Motor neuron (in vitro differentiated cells): ENCODE measurements at regions of chr4 and their contacts with region 1.

Region 1: DNA sequence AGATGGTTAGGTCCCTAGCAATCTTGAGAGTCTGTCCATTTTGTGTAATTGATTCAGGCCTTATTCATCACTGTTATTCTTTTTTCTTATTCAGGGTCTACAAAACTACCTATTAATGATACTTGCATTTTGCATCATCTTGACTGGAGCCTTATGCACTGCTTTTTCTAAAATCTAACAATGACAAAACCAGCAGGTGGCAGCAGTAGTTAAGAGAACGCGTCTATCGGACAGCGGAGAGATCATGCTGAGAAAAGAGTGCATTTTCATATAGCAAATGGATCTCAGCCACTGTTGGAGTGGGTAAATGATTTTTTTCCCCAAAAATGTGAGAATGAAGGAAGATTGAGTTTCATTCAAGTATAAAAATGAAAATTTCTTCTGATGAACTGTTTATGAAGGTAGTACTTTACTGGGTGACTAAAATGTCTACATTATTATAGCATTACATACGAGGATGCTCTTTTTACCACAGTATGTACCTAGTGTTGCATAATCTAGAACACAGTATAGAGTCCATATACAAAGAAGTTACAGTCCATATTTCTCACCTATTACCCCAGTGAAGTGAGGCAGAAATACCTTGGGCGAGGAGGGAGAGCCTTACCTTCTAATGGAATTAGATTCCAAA is 43.2 kb downstream of the TMEM144 start:
- ATAC-seq: peak; percentile 68 to 92 (median 85)
- H3K4me3 ChIP-seq: no peak overlapping the region
- H3K27ac ChIP-seq: no peak overlapping the region
- H3K4me1 ChIP-seq: no peaks in the 10 kb centered on the region

Region 2: GRCh38 chr4:157751631-157752030 is 501.8 kb before region 1 on chr4:
- in situ Hi-C with region 1: no loop called
- ATAC-seq: no peak
- H3K4me3 ChIP-seq: no peak overlapping the region
- H3K27ac ChIP-seq: no peak overlapping the region
- H3K4me1 ChIP-seq: no peaks in the 10 kb centered on the region

Region 3: GRCh38 chr4:157978680-157979361 is 274.6 kb before region 1 on chr4:
- in situ Hi-C with region 1: loop called in 1 of 9 experiments (anchors 25 kb)
- ATAC-seq: peak; percentile 82 to 92 (median 90)
- H3K4me3 ChIP-seq: peak overlapping the region in 1 of 5 donors; percentile 8
- H3K27ac ChIP-seq: no peak overlapping the region
- H3K4me1 ChIP-seq: peaks cover 0 to 9% of the 10 kb centered on the region in 2 donors

Region 4: GRCh38 chr4:158376106-158376840 is 122.8 kb after region 1 on chr4:
- in situ Hi-C with region 1: loop called in 1 of 9 experiments (anchors 25 kb)
- ATAC-seq: peak in 1 of 8 experiments; percentile 28
- H3K4me3 ChIP-seq: no peak overlapping the region
- H3K27ac ChIP-seq: no peak overlapping the region
- H3K4me1 ChIP-seq: no peaks in the 10 kb centered on the region

Region 5: GRCh38 chr4:158496030-158496741 is 242.7 kb after region 1 on chr4:
- in situ Hi-C with region 1: loop called in 1 of 9 experiments (anchors 25 kb)
- ATAC-seq: peak in 1 of 8 experiments; percentile 28
- H3K4me3 ChIP-seq: no peak overlapping the region
- H3K27ac ChIP-seq: no peak overlapping the region
- H3K4me1 ChIP-seq: no peaks in the 10 kb centered on the region

Region 6: DNA sequence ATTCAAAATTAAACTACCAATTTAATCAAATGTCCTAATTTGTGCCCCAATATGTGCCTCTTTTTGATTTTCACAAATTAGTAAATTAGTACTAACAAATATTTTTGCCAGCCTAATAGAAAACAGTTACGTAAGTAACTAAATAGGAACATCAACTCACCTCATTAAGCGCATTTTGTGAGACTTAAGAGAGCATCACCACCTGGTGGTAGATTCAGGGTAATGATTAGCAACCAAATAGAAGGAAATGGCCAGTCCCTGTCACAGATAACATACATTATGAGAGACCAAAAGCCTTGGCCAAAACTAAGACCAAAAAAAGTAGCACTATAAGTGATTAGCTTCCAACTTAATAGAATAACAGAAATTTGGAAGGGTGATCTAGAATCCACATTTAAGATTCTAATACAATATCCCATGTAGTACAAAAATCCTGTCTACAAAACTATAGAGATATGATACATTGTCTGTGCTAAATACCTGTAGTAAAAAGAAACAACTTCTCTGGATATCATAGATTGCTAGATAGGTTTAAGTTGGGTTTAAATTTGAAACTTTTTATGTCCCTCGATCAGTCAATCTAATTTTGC is 371.5 kb after region 1 on chr4:
- in situ Hi-C with region 1: loop called in 5 of 9 experiments (anchors 10 to 25 kb)
- ATAC-seq: peak in 5 of 8 experiments; percentile 54 to 64 (median 61)
- H3K4me3 ChIP-seq: no peak overlapping the region
- H3K27ac ChIP-seq: no peak overlapping the region
- H3K4me1 ChIP-seq: peaks cover 0 to 8% of the 10 kb centered on the region in 2 donors

Region 7: DNA sequence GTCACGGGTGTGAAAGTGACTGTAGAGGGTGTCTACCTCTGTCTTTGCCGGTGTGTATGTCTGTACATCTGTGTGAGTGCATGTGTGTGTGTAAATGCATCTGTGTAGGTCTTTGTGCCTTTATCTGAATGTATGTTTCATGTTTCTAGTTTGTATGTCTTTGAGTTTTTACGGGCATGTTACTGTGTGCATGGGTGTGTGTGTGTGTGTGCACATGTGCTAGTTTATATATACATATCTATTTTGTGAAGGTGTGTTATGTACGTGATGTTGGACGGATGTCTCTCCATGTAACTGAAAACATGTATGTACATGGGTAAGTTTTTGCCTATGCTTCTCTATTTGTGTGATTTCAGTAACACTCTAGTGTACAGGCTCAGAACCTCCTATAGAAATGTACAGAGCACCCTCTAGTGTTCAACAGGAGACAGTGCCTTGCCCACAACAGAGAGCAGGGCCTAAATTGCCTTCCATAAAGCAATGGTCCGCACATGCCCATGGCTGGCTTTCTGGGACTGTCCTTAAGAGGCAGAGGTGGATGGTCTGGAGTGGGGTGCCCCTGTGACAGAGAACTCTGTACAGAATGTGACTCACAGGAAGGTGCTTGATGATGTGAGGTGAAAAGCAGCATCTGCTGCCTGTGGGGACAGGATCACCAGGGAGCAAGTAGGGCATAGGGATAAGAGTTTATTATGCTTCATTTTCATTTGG is 1193.0 kb after region 1 on chr4:
- in situ Hi-C with region 1: loop called in 1 of 9 experiments (anchors 25 kb)
- ATAC-seq: peak; percentile 98 to 100 (median 100)
- H3K4me3 ChIP-seq: no peak overlapping the region
- H3K27ac ChIP-seq: no peak overlapping the region
- H3K4me1 ChIP-seq: peaks cover 0 to 8% of the 10 kb centered on the region in 2 donors

Region 8: DNA sequence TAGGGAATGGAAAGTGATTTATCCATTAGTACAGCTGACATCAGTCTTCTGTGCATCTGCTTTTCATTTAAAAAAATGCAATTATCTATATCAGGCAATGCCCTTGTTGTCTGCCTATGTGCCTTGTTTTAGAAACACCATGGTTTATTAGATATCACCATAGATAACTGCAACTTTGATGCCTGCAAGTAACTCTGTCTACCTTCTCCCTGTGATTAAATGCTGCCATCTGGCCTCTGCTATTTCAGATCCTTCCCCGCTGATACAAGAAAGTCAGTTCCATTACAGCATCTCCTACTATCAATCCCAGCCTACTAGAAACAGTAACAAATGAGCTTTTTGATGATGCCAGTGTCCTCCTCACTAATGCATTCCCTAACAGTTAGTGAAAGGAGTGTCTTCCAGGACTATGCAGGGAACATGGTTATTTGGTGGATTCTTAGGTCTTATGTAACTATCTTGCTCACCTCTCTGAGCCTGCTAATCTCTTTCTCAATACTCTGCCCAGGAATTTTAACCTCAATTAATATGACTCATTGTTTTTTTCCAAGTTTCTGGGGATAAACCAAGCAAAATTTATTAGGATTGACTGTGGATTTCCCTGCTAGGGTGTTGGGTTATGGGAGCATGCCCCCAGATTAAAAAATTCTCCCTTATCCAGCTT is 1294.3 kb after region 1 on chr4:
- in situ Hi-C with region 1: no loop called
- ATAC-seq: no peak
- H3K4me3 ChIP-seq: no peak overlapping the region
- H3K27ac ChIP-seq: no peak overlapping the region
- H3K4me1 ChIP-seq: no peaks in the 10 kb centered on the region